ENCODE measurements at regions of chr12 and their contacts with region 1.

Region 1: DNA sequence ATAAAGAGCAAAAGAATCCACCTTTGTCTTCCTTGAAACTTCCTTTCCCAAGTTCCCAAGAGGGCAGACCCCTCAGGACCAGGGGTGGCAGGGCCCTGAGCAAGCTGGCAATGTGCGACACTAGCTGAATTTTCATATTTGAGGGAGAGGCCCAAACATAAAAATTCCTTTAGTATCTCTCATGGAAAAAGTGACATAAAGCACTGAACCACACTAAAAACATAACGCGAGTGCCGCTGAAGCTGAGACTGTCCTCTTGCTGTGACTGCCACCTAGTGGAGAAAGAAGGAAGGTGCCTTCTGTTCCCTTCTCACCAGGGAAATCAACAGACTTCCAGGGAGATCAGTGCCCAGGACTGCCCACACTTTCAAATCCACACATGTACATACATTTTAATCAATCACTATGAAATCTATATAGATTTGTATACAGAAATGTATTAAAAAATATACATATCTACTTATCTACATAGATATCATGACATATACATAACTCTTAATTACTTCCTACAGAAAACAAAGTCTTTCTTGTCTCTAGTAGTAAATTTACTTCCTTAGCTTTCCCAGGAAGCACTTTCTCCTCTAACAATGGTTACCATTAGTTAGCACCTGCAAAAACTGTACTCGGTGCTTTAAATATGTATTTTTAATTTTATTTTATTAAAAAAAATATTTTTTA is 53.8 kb downstream of the SSH1 start:
- DNase-seq: peak; percentile 83
- H3K4me3 ChIP-seq: no peak overlapping the region
- CTCF ChIP-seq: peak; percentile 83

Region 2: GRCh38 chr12:108576660-108577234 is 226.8 kb before region 1 on chr12:
- CTCF ChIA-PET with region 1: interaction called, 19 read pairs
- POLR2A ChIA-PET with region 1: no interaction called
- DNase-seq: no peak
- H3K4me3 ChIP-seq: no peak overlapping the region
- CTCF ChIP-seq: no peak

Region 3: DNA sequence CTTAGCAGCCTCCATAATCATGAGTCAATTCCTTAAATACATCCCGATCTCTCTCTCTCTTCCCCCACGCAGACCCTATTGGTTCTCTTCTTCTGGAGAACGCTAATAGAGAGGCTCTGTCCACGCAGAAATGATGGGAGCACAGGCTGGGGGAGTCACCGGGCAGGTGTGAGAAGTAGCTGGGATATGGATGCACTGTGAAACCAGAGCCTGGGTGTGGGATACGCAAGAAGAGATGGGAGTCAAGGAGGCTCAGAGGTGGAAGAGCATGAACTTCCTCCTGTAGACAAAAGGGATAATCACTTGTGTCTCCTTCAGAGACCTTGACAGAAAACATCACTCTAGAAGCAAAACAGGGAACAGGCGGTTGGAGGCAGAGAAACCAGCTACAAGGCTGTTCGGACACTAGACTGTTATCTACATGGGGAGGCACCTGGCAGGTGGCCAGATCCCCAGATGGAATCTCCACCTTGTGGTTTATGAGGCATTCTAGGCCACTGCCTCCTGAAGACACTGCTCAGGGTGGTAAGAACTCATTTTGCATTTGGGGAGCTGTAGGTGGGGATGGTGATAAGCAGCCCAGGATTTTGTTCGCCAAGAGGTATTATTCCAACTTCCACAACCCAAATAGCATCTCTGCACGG is 162.6 kb before region 1 on chr12:
- CTCF ChIA-PET with region 1: interaction called, 24 read pairs
- POLR2A ChIA-PET with region 1: interaction called, 3 read pairs
- DNase-seq: no peak
- H3K4me3 ChIP-seq: no peak overlapping the region
- CTCF ChIP-seq: no peak

Region 4: DNA sequence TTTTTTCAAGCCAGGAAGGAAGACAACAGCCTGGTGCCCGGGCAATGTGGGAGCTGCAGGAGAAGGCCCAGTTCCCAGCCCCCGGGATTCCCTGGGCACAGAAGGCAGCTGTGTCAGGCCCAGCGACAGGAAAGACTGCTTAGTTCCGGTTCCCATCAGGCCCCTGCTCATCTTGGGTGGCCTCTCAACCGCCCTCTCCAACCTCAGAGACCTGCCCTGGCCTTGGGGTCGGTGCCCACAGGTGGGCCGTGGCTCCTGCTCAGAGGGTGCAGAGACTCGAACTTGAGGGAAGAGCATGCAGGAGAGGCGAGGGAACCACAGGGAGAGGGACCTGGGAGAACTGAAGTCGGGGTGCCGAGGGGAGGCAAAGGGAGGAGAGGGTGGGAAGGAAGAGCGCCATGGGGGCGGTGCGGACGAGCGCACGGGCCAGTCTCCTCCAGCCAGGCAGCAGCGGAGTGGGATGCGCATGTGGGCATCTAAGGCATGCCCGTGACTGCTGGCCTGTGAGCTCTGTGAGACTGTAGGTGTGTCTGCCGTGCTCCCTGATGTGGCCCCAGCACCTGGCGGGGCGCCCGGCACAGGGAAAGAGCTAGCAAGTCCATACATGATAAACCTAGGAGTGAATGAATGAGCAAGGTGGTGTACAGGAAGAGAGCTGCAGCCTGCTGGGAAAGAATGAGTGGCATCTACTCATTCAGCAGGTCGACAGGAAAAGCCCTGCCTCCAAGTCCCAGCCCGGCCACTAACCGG is 11.1 kb after region 1 on chr12:
- CTCF ChIA-PET with region 1: interaction called, 62 read pairs
- POLR2A ChIA-PET with region 1: interaction called, 3 read pairs
- DNase-seq: no peak
- H3K4me3 ChIP-seq: no peak overlapping the region
- CTCF ChIP-seq: no peak

Region 5: GRCh38 chr12:108838194-108839017 is 34.8 kb after region 1 on chr12:
- CTCF ChIA-PET with region 1: interaction called, 22 read pairs
- POLR2A ChIA-PET with region 1: interaction called, 9 read pairs
- DNase-seq: peak; percentile 100
- H3K4me3 ChIP-seq: no peak overlapping the region
- CTCF ChIP-seq: no peak

Region 6: GRCh38 chr12:109093022-109093918 is 289.7 kb after region 1 on chr12 and contains the start of gene ALKBH2:
- CTCF ChIA-PET with region 1: interaction called, 11 read pairs
- POLR2A ChIA-PET with region 1: no interaction called
- DNase-seq: peak; percentile 34
- H3K4me3 ChIP-seq: peak within 1 kb of the TSS; percentile 78
- CTCF ChIP-seq: peak; percentile 99

Region 7: GRCh38 chr12:109247831-109248654 is 444.5 kb after region 1 on chr12:
- CTCF ChIA-PET with region 1: no interaction called
- POLR2A ChIA-PET with region 1: no interaction called
- DNase-seq: no peak
- H3K4me3 ChIP-seq: no peak overlapping the region
- CTCF ChIP-seq: no peak

Measured in AG04449 (cell line).